ENCODE measurements at regions of chr1 and their contacts with region 1.

Region 1: GRCh38 chr1:152001391-152002249 is 8.0 kb upstream of the S100A10 start:
- DNase-seq: peak; percentile 95
- H3K4me3 ChIP-seq: no peak overlapping the region
- H3K27ac ChIP-seq: no peak overlapping the region
- H3K4me1 ChIP-seq: no peaks in the 10 kb centered on the region
- H3K27me3 ChIP-seq: no peaks in the 10 kb centered on the region
- CTCF ChIP-seq: peak; percentile 94

Region 2: DNA sequence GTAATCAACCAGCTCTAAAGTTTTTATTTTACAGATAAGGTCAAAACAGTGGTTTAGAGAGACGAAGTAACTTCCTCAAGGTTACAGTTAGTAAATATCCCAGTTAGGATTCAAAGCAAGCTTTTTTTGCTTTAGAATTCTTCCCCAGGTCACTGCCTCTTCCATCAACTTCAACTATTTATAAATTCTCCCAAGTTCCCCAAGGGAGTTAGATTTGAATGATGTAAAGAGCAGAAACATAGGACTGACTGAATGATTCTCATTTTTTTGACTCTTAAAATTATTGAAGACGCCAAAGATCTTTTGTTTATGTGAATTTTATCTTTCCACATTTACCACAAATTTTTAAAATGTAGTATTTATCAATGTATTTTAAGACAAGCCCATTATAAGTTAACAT is 546.4 kb before region 1 on chr1:
- intact Hi-C with region 1: no loop called
- DNase-seq: no peak
- H3K4me3 ChIP-seq: no peak overlapping the region
- H3K27ac ChIP-seq: no peak overlapping the region
- H3K4me1 ChIP-seq: peaks cover 3% of the 10 kb centered on the region
- H3K27me3 ChIP-seq: no peaks in the 10 kb centered on the region
- CTCF ChIP-seq: no peak

Region 3: DNA sequence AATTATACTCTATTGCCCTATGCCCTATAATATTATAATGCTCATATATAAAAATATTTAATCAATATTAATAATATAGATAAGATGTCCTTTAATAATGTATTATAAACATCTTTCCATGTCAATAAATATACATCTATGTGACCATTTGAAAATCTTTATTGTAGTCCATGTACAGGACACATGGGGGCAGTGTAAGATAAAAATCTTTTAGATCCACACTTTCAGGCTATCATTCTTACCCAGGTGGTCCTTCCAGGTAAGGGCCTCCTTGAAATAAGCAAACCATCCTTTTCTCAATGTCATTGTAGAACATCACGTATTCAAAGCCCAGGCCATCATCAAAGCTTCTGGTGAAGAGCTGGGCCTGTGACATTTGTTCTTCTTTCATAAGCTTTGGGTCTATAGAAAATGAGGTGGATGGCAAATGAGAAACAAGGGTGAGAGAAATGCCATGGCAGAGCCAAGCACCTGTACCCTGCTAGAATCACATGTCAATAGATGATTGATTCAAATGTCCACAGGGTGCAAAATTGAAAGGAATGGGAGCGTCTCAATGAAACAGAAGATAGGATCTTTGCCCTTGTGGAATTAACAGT is 112.5 kb before region 1 on chr1:
- intact Hi-C with region 1: loop called (anchors 5 kb)
- DNase-seq: no peak
- H3K4me3 ChIP-seq: no peak overlapping the region
- H3K27ac ChIP-seq: no peak overlapping the region
- H3K4me1 ChIP-seq: no peaks in the 10 kb centered on the region
- H3K27me3 ChIP-seq: no peaks in the 10 kb centered on the region
- CTCF ChIP-seq: peak; percentile 18

Region 4: DNA sequence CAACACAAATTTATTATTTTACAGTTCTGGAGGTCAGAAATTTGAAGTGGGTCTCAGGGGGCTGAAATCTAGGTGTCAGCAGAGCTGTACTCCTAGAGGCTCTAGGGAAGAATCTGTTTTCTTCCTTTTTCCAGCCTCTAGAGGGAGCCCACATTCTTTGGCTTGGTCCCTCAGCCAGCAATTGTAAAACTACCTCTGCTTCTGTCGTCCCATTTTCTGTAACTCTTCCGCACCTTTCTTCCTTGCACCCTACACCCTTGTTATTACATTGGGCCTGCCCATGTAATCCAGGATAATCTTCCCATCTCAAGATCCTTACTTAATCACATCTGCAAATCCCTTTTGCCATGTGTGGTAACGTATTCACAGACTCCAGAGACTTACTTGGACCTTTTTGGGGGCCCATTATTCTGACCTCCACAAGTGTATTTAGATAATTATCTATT is 67.5 kb before region 1 on chr1:
- intact Hi-C with region 1: loop called (anchors 2 kb)
- DNase-seq: peak; percentile 74
- H3K4me3 ChIP-seq: no peak overlapping the region
- H3K27ac ChIP-seq: no peak overlapping the region
- H3K4me1 ChIP-seq: no peaks in the 10 kb centered on the region
- H3K27me3 ChIP-seq: no peaks in the 10 kb centered on the region
- CTCF ChIP-seq: peak; percentile 83

Measured in colonic mucosa (tissue), 4 donors.